PC-9 (cell line): ENCODE measurements at regions of chr9 and their contacts with region 1.

Region 1: GRCh38 chr9:34591248-34591916 is 1.9 kb upstream of the CNTFR start:
- DNase-seq: peak; percentile 49 to 75
- H3K4me3 ChIP-seq: no peak overlapping the region
- H3K27ac ChIP-seq: no peak overlapping the region
- H3K4me1 ChIP-seq: no peaks in the 10 kb centered on the region
- H3K27me3 ChIP-seq: peaks cover 24% of the 10 kb centered on the region
- CTCF ChIP-seq: peak; percentile 80

Region 2: DNA sequence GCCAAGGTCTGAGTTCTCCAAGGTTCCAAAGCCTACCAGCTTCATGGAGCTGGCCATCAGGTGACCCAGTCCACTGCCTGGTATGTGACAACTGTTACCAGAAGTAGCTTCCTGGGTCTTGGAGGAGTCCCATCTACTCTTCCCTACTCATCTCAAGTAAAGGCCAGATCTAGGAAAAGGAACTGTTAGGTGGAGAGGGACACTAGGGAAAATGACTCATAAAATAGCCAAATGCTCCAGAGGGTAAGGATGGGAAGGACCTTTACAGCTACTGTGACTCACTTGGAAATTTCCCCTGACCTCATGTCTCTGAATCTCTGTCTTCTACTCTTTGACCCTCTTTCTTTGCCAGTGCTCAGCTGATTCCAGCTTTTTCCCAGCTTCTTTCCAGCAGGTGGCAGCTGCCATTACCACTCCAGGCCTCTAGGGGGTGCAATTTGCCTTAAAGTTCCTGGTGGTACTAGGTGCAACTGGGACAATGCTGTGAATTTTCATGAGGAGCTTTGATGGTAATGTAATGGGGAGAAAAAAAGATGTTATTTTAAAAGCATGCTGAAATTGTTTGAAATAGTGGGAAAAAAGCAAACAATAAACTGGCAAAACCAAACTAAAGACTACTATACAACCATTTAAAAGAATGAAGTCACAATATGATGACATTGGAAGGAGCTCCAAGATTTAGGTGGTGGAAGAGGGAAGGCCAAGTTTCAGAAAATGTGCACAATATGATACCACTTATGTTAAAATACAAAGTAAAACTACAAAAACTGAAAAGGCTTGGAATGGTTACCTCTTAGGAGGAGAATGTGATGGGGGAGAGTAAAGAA is 187.6 kb before region 1 on chr9:
- CTCF ChIA-PET with region 1: interaction called, 12 read pairs
- POLR2A ChIA-PET with region 1: no interaction called
- intact Hi-C with region 1: loop called (anchors 2 kb)
- DNase-seq: peak; percentile 40 to 50
- H3K4me3 ChIP-seq: no peak overlapping the region
- H3K27ac ChIP-seq: no peak overlapping the region
- H3K4me1 ChIP-seq: no peaks in the 10 kb centered on the region
- H3K27me3 ChIP-seq: no peaks in the 10 kb centered on the region
- CTCF ChIP-seq: peak; percentile 93